Endothelial cell of umbilical vein (primary cell): ENCODE measurements at regions of chr18 and their contacts with region 1.

Region 1: DNA sequence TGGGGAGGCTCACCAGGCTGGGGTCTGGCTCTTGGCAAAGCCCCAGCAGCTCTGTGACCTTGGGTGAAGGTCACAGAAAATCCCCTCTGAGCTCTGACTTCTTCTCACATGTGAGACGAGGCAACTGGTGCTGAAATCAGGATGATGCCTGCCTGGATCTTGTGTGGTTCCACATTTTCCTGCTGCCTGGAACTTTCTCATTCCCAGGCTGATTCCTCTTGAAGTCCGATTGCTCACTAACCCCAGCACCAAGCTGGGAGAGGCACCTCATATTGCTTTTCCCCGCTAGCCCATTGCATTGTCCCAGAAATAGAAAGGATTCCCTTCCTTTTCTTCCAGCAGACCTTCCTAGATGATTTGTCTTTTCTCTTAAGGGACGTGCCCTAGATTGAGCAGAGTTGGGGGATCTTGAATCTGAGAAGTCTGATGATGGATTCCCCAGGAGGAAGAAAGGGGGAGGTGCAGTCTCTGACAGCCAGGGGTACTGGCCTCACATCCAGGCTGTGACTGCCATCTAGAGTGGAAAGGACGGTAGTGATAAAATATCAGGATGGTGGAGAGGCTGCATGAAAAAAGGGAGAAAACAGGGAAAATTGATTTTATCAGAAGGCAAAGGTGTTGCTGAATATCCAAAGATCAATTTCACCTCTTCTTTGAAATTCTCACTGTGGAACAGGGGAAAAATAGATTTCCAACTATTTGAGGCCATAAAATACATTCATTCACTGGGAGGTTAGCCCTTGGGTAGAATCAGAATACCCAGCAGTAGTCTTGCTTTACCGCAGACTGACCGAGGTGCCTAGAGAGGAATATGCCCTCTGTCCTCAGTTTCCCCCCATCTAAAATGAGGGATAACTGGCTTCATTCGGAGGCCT is 96.3 kb downstream of the FAM210A start:
- DNase-seq: peak; percentile 67
- H3K4me3 ChIP-seq: no peak overlapping the region
- H3K27ac ChIP-seq: no peak overlapping the region
- H3K4me1 ChIP-seq: no peaks in the 10 kb centered on the region
- H3K27me3 ChIP-seq: no peaks in the 10 kb centered on the region
- CTCF ChIP-seq: peak; percentile 63 to 68
- POLR2A ChIP-seq: no peak

Region 2: DNA sequence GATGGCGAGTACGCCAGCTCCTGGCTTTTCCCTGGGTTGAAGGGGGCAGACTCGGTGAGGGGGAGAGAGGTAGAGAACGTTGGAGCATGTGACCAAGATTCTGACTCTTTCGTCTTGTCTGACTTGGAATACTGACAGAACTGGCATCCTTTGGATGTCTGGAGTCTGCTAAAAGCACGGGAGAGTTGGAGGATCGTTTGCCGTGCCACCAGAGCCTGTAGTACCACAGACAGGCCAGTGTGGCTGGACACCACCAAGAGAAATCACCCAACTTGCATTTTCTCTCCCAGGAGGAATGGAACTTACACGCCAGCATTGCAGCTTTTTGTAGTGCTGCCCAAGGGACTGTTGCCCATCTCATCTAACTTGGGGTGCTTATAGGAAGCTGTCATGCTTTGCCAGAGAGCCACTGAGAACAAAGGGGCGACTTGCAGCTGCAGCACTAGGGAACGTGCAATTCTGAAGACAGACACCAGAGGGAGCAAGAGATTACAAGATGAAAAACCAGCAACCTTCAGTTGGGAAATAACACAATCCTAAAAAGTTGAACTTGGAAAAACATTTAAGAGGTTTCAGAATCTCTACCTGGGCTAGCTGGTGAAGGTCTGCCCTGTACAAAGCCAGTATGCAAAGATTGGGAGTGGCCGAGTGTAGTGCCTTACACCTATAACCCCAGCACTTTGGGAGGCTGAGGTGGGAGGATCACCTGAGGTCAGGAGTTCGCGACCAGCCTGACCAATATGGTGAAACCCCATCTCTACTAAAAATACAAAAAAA is 903.1 kb before region 1 on chr18:
- CTCF ChIA-PET with region 1: no interaction called
- POLR2A ChIA-PET with region 1: no interaction called
- dilution Hi-C with region 1: no loop called
- intact Hi-C with region 1: loop called (anchors 5 kb)
- DNase-seq: peak; percentile 81
- H3K4me3 ChIP-seq: no peak overlapping the region
- H3K27ac ChIP-seq: no peak overlapping the region
- H3K4me1 ChIP-seq: no peaks in the 10 kb centered on the region
- H3K27me3 ChIP-seq: no peaks in the 10 kb centered on the region
- CTCF ChIP-seq: peak; percentile 76 to 80
- POLR2A ChIP-seq: no peak

Region 3: DNA sequence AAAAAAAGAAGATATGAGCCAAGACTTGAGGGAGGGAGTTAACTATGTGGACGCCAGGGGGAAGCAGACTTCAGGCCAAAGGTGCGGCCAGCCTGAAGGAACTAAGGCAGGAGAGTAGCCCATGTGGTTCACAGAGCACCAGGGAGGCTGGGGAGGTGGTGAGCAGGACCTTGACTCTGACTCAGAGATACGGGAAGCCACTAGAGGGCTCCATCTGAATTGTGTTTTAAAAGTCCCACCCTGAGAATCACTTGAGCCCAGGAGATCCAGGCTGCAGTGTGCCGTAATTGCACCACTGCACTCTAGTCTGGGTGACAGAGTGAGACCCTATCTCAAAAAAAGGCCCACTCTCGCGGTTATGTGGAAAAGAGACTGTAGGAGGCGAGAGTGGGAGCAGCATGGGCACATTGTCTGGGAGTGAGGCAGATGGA is 626.6 kb before region 1 on chr18:
- CTCF ChIA-PET with region 1: interaction called, 3 read pairs
- POLR2A ChIA-PET with region 1: no interaction called
- dilution Hi-C with region 1: no loop called
- intact Hi-C with region 1: loop called (anchors 2 kb)
- DNase-seq: peak; percentile 61
- H3K4me3 ChIP-seq: no peak overlapping the region
- H3K27ac ChIP-seq: no peak overlapping the region
- H3K4me1 ChIP-seq: no peaks in the 10 kb centered on the region
- H3K27me3 ChIP-seq: no peaks in the 10 kb centered on the region
- CTCF ChIP-seq: peak; percentile 52 to 56
- POLR2A ChIP-seq: no peak

Region 4: DNA sequence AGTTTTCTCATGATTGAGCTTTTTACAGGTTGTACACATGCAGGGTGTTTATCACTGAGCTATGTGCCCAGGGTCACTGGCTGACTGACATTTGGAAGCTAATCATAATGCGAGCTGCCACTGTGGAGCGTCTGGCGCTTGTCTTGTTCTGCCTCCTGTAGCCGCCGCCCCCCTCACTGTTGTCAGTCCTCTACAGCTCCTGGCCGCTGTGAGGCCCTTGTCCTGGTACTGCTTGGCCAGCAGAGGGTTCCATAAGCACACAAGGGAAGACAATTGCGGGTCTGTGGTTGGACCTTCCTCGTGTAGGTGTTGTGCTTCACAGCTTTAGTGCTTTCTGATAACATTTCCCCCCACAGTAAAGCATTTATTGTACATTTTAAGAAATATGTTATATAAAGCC is 517.1 kb before region 1 on chr18:
- CTCF ChIA-PET with region 1: interaction called, 9 read pairs
- POLR2A ChIA-PET with region 1: no interaction called
- dilution Hi-C with region 1: no loop called
- intact Hi-C with region 1: loop called (anchors 1 kb)
- DNase-seq: peak; percentile 64
- H3K4me3 ChIP-seq: no peak overlapping the region
- H3K27ac ChIP-seq: no peak overlapping the region
- H3K4me1 ChIP-seq: no peaks in the 10 kb centered on the region
- H3K27me3 ChIP-seq: no peaks in the 10 kb centered on the region
- CTCF ChIP-seq: peak; percentile 22 to 54
- POLR2A ChIP-seq: no peak

Region 5: GRCh38 chr18:13558124-13558523 is 72.0 kb before region 1 on chr18:
- CTCF ChIA-PET with region 1: interaction called, 14 read pairs
- POLR2A ChIA-PET with region 1: no interaction called
- dilution Hi-C with region 1: no loop called
- intact Hi-C with region 1: loop called (anchors 1 kb)
- DNase-seq: peak; percentile 40
- H3K4me3 ChIP-seq: no peak overlapping the region
- H3K27ac ChIP-seq: no peak overlapping the region
- H3K4me1 ChIP-seq: no peaks in the 10 kb centered on the region
- H3K27me3 ChIP-seq: peaks cover 6 to 23% of the 10 kb centered on the region in 2 experiments
- CTCF ChIP-seq: peak; percentile 47 to 62
- POLR2A ChIP-seq: no peak